ENCODE measurements at regions of chr6 and their contacts with region 1.

Region 1: DNA sequence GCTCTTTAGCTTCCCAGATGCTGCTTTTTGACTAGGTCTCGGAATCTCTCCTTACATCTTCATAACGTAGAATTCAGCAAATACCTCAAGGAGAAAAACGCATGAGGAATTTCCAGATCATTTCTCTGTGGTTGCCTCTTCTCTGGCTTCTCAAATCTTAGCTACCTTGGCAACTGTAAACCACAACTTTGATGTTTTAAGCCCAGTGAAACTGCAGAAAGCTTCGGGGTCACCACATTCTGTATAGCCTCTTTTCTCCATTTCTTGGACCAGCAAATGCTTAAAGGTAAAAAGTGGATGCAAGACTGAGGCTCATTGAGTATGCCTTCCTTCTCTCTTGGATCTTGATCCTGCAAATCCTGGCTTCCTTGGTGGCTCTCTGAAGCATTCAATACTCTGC is 125.5 kb upstream of the FBXL4 start:
- H3K4me3 ChIP-seq: no peak overlapping the region
- H3K27ac ChIP-seq: no peak overlapping the region
- H3K4me1 ChIP-seq: no peaks in the 10 kb centered on the region
- CTCF ChIP-seq: no peak

Region 2: DNA sequence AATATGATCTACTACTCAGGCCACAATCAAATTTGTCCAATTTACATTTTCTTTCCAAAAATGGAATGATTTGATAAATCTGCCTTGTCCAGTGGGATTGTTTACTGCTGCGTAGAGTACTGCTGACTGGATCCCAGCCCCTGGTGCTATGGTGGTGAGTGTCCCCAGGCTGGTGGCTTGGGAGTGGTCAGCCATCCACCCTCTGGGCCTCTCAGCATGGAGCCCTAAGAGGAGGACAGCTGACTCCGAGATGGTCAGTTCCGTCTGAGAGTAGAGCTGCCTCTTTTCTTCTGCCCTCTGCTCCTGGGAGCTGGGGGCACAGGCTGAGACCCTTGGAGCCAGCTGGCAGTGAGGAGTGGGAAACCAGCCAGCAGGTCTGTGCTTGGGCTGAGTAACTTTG is 556.1 kb after region 1 on chr6:
- CTCF ChIA-PET with region 1: no interaction called
- POLR2A ChIA-PET with region 1: interaction called, 11 read pairs
- H3K4me3 ChIP-seq: no peak overlapping the region
- H3K27ac ChIP-seq: no peak overlapping the region
- H3K4me1 ChIP-seq: 0 out of 2 replicates have a peak, but pooled peaks cover 2% of the 10 kb centered on the region
- CTCF ChIP-seq: no peak